Dendritic cell treated with granulocyte-macrophage colony-stimulating factor and Interleukin-4, amounts not matched to agents 40 ng/mL and 50 ng/mL, for 4 days (primary cell): ENCODE measurements at regions of chr5 and their contacts with region 1.

Region 1: DNA sequence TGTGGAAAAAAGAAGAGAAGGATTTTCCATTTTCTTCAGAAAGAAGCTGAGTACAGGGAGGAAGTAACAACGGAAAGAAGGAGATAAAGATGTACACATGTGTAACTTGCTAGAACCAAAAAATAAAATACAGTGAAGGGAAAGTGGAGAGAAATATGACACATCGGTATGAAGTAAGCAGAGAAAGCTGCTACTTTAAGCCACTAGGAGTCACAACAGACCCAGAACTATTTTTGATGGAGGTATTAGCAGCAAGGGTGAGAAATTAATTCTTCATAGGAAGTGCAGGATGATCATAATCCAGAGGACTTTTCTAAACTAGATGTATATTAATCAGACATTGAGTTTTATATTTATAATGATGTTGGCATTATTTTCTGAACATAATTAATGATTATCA is 88.5 kb downstream of the FAM174A start:
- H3K4me3 Mint-ChIP-seq: no peak overlapping the region
- H3K27ac Mint-ChIP-seq: no peak overlapping the region
- H3K4me1 Mint-ChIP-seq: peaks cover 6% of the 10 kb centered on the region
- H3K27me3 Mint-ChIP-seq: no peaks in the 10 kb centered on the region

Region 2: DNA sequence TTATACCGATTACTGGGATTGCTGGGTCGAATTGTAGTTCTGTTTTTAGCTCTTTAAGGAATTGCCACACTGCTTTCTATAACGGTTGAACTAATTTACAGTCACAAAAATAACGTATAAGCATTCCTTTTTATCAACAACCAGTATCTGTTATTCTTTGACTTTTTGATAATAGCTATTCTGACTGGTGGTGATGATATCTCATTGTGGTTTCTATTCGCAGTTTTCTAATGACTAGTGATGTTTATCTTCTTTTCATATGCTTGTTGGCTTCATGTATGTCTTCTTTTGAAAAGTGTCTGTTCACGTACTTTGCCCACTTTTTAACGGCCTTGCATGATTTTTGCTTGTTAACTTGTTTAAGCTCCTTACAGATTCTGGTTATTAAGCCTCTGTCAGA is 14.1 kb before region 1 on chr5:
- intact Hi-C with region 1: no loop called
- H3K4me3 Mint-ChIP-seq: no peak overlapping the region
- H3K27ac Mint-ChIP-seq: no peak overlapping the region
- H3K4me1 Mint-ChIP-seq: no peaks in the 10 kb centered on the region
- H3K27me3 Mint-ChIP-seq: no peaks in the 10 kb centered on the region

Region 3: DNA sequence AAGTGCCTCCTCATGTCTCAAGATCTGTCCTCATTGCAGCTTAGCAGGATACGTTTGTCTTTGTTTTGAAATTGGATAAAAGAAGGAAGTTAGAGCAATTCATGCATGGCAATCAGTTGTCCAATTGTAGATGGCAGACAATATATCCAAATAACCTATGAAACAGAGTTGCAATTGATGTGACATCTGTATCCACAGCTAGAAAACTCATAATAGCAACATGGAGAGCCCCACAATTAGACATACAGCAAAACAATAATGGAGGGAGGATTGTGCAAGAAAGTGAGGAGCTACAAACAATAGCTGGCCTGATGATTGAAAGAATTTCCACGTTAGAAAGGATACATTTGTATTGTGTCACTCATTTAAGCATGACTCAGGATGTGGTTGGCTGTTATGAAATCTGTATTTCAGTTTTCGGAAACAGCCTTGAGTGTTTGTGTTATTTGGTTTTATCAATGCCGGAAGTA is 43.5 kb after region 1 on chr5:
- intact Hi-C with region 1: no loop called
- H3K4me3 Mint-ChIP-seq: no peak overlapping the region
- H3K27ac Mint-ChIP-seq: peak overlapping the region; percentile 17
- H3K4me1 Mint-ChIP-seq: peaks cover 20% of the 10 kb centered on the region
- H3K27me3 Mint-ChIP-seq: no peaks in the 10 kb centered on the region

Region 4: DNA sequence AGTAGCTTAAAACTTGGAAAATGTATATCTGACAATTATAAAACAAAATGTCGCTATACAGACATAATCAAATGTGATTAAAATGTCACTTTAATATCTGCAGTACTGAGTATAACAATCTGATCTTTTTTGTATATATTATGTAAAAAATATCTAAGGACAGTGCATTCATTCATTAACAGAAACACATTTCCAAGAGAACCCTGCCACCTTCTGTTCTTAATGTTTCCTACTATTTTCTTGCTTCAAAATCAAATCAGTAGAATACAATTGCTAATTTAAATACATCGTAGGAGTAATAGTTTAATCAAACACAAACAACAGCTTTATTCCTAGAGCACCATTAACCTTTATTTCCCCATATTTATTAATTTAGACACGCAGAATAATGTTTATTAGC is 422.0 kb after region 1 on chr5:
- intact Hi-C with region 1: loop called (anchors 1 kb)
- H3K4me3 Mint-ChIP-seq: no peak overlapping the region
- H3K27ac Mint-ChIP-seq: no peak overlapping the region
- H3K4me1 Mint-ChIP-seq: no peaks in the 10 kb centered on the region
- H3K27me3 Mint-ChIP-seq: no peaks in the 10 kb centered on the region

Region 5: GRCh38 chr5:101678481-101679193 is 1054.9 kb after region 1 on chr5:
- intact Hi-C with region 1: loop called (anchors 5 kb)
- H3K4me3 Mint-ChIP-seq: no peak overlapping the region
- H3K27ac Mint-ChIP-seq: no peak overlapping the region
- H3K4me1 Mint-ChIP-seq: peaks cover 4% of the 10 kb centered on the region
- H3K27me3 Mint-ChIP-seq: no peaks in the 10 kb centered on the region